ENCODE measurements at regions of chr6 and their contacts with region 1.

Region 1: GRCh38 chr6:104344223-104344622 is 515.5 kb downstream of the HACE1 start:
- DNase-seq: no peak

Region 2: GRCh38 chr6:104325341-104326172 is 18.7 kb before region 1 on chr6:
- intact Hi-C with region 1: loop called in 1 of 2 experiments (anchors 1 kb)
- DNase-seq: no peak